ENCODE measurements at regions of chr5 and their contacts with region 1.

Region 1: DNA sequence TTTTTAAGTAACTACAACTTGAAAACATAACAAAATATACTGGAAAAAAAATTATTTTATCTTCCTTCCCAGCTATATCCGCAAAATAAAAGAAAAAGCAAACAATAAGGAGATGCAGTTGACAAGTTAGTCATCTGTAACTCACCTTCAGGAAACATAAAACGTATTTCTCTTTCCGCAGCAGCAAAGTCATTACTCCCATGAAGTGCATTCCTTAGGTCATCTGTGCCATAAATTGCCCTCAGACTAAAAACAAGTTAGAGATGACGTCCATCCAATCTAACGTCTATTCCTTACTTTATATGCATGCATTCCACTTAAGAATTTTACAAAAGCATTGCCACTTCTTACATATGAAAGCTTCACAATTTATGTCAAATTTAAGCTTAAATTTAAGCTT is 10.9 kb downstream of the NME5 start:
- DNase-seq: peak; percentile 18 to 77 (median 52)
- H3K4me3 ChIP-seq: no peak overlapping the region
- H3K27ac ChIP-seq: peak overlapping the region in 1 of 2 experiments; percentile 71
- H3K4me1 ChIP-seq: peaks cover 0 to 3% (median 0%) of the 10 kb centered on the region in 4 experiments
- H3K27me3 ChIP-seq: no peaks in the 10 kb centered on the region

Region 2: GRCh38 chr5:138035605-138036537 is 92.5 kb before region 1 on chr5:
- CTCF ChIA-PET with region 1: interaction called, 27 read pairs
- POLR2A ChIA-PET with region 1: no interaction called
- DNase-seq: peak; percentile 92 to 95 (median 93)
- H3K4me3 ChIP-seq: no peak overlapping the region
- H3K27ac ChIP-seq: no peak overlapping the region
- H3K4me1 ChIP-seq: peaks cover 4 to 30% (median 17%) of the 10 kb centered on the region in 4 experiments
- H3K27me3 ChIP-seq: no peaks in the 10 kb centered on the region

Region 3: DNA sequence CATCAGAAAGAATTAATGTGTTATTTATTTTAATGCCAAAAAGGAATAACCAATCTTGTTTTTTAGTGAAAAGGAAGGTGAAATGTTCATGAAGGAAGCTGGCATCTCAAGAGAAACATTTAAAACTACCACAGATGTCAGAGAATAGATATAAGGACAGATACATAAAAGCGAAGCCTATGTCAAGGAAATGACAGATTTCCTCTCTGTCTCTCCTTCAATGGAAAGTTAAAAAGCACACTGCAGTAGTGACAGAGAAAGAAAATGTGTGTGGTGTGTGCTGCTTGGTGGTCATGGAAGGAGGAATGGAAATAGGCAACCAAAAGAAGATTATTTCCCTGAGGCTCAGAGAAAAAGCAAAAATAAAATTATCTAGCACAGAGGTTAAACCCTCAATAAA is 35.3 kb before region 1 on chr5:
- CTCF ChIA-PET with region 1: interaction called, 18 read pairs
- POLR2A ChIA-PET with region 1: no interaction called
- DNase-seq: peak in 1 of 3 donors; percentile 23
- H3K4me3 ChIP-seq: no peak overlapping the region
- H3K27ac ChIP-seq: peak overlapping the region in 1 of 2 experiments; percentile 46
- H3K4me1 ChIP-seq: peaks cover 3 to 21% (median 19%) of the 10 kb centered on the region in 4 experiments
- H3K27me3 ChIP-seq: no peaks in the 10 kb centered on the region

Region 4: GRCh38 chr5:138141734-138142133 is 13.4 kb after region 1 on chr5:
- CTCF ChIA-PET with region 1: interaction called, 11 read pairs
- POLR2A ChIA-PET with region 1: no interaction called
- DNase-seq: no peak
- H3K4me3 ChIP-seq: no peak overlapping the region
- H3K27ac ChIP-seq: no peak overlapping the region
- H3K4me1 ChIP-seq: peaks cover 9 to 14% (median 10%) of the 10 kb centered on the region in 4 experiments
- H3K27me3 ChIP-seq: peaks cover 0 to 2% (median 0%) of the 10 kb centered on the region in 5 experiments

Region 5: GRCh38 chr5:138210985-138211384 is 82.7 kb after region 1 on chr5:
- CTCF ChIA-PET with region 1: no interaction called
- POLR2A ChIA-PET with region 1: no interaction called
- DNase-seq: no peak
- H3K4me3 ChIP-seq: no peak overlapping the region
- H3K27ac ChIP-seq: no peak overlapping the region
- H3K4me1 ChIP-seq: peaks cover 6 to 20% (median 12%) of the 10 kb centered on the region in 4 experiments
- H3K27me3 ChIP-seq: no peaks in the 10 kb centered on the region